ENCODE measurements at regions of chr4 and their contacts with region 1.

Region 1: DNA sequence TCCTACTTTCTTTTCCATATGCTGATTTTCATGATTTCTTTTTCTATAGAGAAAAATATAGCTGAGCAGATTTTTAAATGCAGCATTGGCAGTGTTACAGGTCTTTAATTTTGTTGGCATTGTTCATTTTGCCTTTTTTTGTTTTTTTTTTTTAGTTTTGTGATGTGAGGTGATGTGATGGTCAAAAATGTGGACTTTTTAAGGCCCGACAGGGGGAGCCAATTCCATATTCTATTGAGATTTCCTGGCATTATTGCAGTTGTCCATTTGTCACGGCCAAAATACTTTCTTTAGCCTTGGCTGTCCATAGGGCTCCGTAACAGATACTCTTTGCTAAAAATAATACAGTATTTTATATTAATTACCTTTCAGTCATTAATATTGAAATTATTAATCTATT is 47.8 kb downstream of the SLIT2 start:
- DNase-seq: peak in 4 of 7 donors; percentile 19 to 54 (median 26)
- H3K4me3 ChIP-seq: no peak overlapping the region
- H3K27ac ChIP-seq: no peak overlapping the region
- H3K4me1 ChIP-seq: peaks cover 0 to 9% of the 10 kb centered on the region in 2 donors
- H3K27me3 ChIP-seq: no peaks in the 10 kb centered on the region
- CTCF ChIP-seq: peak; percentile 41 to 60 (median 49)
- POLR2A ChIP-seq: no peak

Region 2: DNA sequence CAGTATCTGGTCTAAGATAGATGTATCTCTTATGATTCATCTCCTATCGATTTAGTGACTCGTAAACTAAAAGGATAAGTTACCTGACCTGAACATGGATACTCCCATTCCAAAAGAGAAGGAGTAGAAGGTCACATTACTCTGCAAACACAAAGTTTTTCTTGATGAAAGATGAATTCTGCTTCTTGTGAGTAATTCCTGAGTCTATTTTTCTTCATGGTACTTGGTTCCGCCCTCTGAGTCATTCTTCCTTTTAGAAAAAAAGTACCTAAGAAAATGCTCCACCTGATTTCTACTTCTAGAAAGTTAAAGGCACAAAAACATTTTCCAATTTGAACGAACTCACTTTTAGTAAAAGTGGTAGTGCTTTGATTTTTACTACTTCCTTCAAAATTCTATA is 270.8 kb before region 1 on chr4:
- intact Hi-C with region 1: no loop called
- DNase-seq: no peak
- H3K4me3 ChIP-seq: no peak overlapping the region
- H3K27ac ChIP-seq: no peak overlapping the region
- H3K4me1 ChIP-seq: no peaks in the 10 kb centered on the region
- H3K27me3 ChIP-seq: no peaks in the 10 kb centered on the region
- CTCF ChIP-seq: no peak
- POLR2A ChIP-seq: no peak

Region 3: GRCh38 chr4:20544645-20545044 is 245.1 kb after region 1 on chr4:
- intact Hi-C with region 1: loop called in 1 of 2 experiments (anchors 5 kb)
- DNase-seq: no peak
- H3K4me3 ChIP-seq: no peak overlapping the region
- H3K27ac ChIP-seq: no peak overlapping the region
- H3K4me1 ChIP-seq: peaks cover 0 to 8% of the 10 kb centered on the region in 2 donors
- H3K27me3 ChIP-seq: no peaks in the 10 kb centered on the region
- CTCF ChIP-seq: peak; percentile 26 to 75 (median 64)
- POLR2A ChIP-seq: no peak